B cell (primary cell): ENCODE measurements at regions of chr12 and their contacts with region 1.

Region 1: DNA sequence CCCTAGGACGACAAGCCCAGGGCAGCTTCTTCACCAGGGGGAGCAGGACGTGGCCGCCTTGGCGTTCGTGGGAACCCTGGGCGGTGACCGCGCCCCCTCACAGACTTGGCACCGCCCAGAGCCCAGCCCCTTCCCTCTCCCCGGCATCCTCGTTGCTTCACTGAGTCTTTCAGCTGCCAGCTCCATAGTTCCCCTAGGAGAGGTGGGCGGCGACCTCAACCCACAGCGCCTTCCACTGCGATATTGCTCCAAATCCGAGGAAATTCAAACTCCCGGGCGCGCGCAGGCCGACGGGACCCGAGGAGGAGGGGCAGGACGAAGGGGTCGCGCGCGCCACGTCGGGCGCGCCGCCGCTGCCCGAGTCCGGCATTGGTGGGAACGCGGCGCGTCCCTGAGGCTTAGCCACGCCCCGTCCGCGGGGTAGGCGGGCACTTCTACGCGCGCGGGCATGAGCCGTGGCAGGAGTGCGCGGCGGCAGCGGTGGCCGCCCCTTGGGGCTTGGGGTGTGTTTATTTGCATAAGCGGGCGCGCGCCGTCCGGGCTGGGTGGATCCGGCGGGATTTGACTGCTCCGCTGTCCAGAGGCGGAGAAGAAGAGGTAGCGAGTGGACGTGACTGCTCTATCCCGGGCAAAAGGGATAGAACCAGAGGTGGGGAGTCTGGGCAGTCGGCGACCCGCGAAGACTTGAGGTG is at the starts of genes APAF1 and IKBIP:
- DNase-seq: peak; percentile 98
- ATAC-seq: peak; percentile 88
- H3K4me3 ChIP-seq: peak within 1 kb of the TSS; percentile 84 to 99 (median 92)
- H3K4me3 Mint-ChIP-seq: peak within 1 kb of the TSS; percentile 96
- H3K27ac ChIP-seq: peak within 1 kb of the TSS; percentile 77 to 84
- H3K27ac Mint-ChIP-seq: peak within 1 kb of the TSS; percentile 98
- H3K4me1 ChIP-seq: peaks cover 13 to 14% of the 10 kb centered on the region in 2 donors
- H3K4me1 Mint-ChIP-seq: peaks cover 23% of the 10 kb centered on the region
- H3K27me3 ChIP-seq: no peaks in the 10 kb centered on the region
- H3K27me3 Mint-ChIP-seq: no peaks in the 10 kb centered on the region
- CTCF ChIP-seq: peak; percentile 1
- total RNA-seq, gene APAF1: 36.9 and 37.8 TPM in 2 replicates
- total RNA-seq, gene IKBIP: 12.0 TPM in 2 replicates

Region 2: GRCh38 chr12:96906849-96907670 is 1737.8 kb before region 1 on chr12 and contains the start of gene NEDD1:
- CTCF ChIA-PET with region 1: no interaction called
- POLR2A ChIA-PET with region 1: no interaction called
- intact Hi-C with region 1: loop called (anchors 2 kb)
- DNase-seq: peak; percentile 89
- ATAC-seq: peak; percentile 85
- H3K4me3 ChIP-seq: peak within 1 kb of the TSS; percentile 82 to 98 (median 94)
- H3K4me3 Mint-ChIP-seq: peak within 1 kb of the TSS; percentile 97
- H3K27ac ChIP-seq: peak within 1 kb of the TSS; percentile 91 to 96
- H3K27ac Mint-ChIP-seq: peak within 1 kb of the TSS; percentile 97
- H3K4me1 ChIP-seq: peaks cover 17 to 21% of the 10 kb centered on the region in 2 donors
- H3K4me1 Mint-ChIP-seq: peaks cover 42% of the 10 kb centered on the region
- H3K27me3 ChIP-seq: no peaks in the 10 kb centered on the region
- H3K27me3 Mint-ChIP-seq: no peaks in the 10 kb centered on the region
- CTCF ChIP-seq: no peak
- total RNA-seq, gene NEDD1: 16.8 and 20.3 TPM in 2 replicates

Region 3: DNA sequence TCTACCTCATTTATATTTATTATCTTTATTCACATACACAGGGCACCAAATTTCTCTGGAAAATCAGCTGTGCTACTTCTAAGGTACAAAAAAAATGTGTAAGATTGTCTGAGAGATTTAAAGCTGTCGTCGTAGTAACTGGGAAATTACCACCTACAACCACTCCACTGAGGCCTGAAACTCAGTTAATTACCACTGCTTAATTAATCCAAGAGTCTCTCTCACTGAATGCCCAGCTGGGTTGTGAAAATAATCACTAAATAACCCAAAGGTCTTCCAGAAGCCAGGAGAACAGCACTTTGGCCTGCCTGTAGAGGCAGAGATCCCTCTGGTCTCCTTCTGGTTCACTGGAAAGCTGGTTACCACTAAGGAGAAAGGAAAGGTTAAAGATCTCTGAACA is 336.7 kb before region 1 on chr12:
- CTCF ChIA-PET with region 1: no interaction called
- POLR2A ChIA-PET with region 1: no interaction called
- intact Hi-C with region 1: no loop called
- DNase-seq: no peak
- ATAC-seq: no peak
- H3K4me3 ChIP-seq: no peak overlapping the region
- H3K4me3 Mint-ChIP-seq: no peak overlapping the region
- H3K27ac ChIP-seq: no peak overlapping the region
- H3K27ac Mint-ChIP-seq: no peak overlapping the region
- H3K4me1 ChIP-seq: no peaks in the 10 kb centered on the region
- H3K4me1 Mint-ChIP-seq: no peaks in the 10 kb centered on the region
- H3K27me3 ChIP-seq: peaks cover 0 to 4% (median 1%) of the 10 kb centered on the region in 4 experiments
- H3K27me3 Mint-ChIP-seq: peaks cover 15% of the 10 kb centered on the region
- CTCF ChIP-seq: no peak

Region 4: DNA sequence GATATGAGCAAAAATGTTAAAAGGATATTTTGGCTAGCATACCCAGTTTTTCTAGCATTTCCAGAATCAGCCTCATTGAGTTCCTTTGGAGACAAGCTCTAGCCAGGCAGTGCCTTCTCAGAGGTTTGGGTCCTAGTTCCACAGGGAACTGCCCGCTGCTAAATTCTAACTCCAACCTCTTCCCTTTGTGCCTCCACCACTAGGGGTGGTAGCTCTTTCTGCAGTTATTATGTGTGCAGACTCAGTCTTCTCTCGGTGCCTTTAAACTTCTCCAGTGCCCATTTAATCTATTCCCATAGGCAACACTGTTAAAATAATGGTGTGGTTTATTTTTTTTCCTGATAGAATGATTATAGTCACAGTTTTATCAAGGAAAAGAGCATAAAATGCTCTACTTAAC is 72.8 kb before region 1 on chr12:
- CTCF ChIA-PET with region 1: interaction called, 127 read pairs
- POLR2A ChIA-PET with region 1: interaction called, 3 read pairs
- intact Hi-C with region 1: loop called (anchors 2 kb)
- DNase-seq: no peak
- ATAC-seq: no peak
- H3K4me3 ChIP-seq: no peak overlapping the region
- H3K4me3 Mint-ChIP-seq: no peak overlapping the region
- H3K27ac ChIP-seq: no peak overlapping the region
- H3K27ac Mint-ChIP-seq: no peak overlapping the region
- H3K4me1 ChIP-seq: no peaks in the 10 kb centered on the region
- H3K4me1 Mint-ChIP-seq: no peaks in the 10 kb centered on the region
- H3K27me3 ChIP-seq: no peaks in the 10 kb centered on the region
- H3K27me3 Mint-ChIP-seq: peaks cover 3% of the 10 kb centered on the region
- CTCF ChIP-seq: peak; percentile 12

Region 5: GRCh38 chr12:98612696-98613334 is 32.0 kb before region 1 on chr12:
- CTCF ChIA-PET with region 1: interaction called, 11 read pairs
- POLR2A ChIA-PET with region 1: interaction called, 3 read pairs
- intact Hi-C with region 1: loop called (anchors 1 kb)
- DNase-seq: peak; percentile 86
- ATAC-seq: peak; percentile 93
- H3K4me3 ChIP-seq: peak overlapping the region in 1 of 5 experiments; percentile 15
- H3K4me3 Mint-ChIP-seq: peak overlapping the region; percentile 62
- H3K27ac ChIP-seq: peak overlapping the region; percentile 63 to 67
- H3K27ac Mint-ChIP-seq: peak overlapping the region; percentile 95
- H3K4me1 ChIP-seq: peaks cover 14 to 16% of the 10 kb centered on the region in 2 donors
- H3K4me1 Mint-ChIP-seq: peaks cover 24% of the 10 kb centered on the region
- H3K27me3 ChIP-seq: no peaks in the 10 kb centered on the region
- H3K27me3 Mint-ChIP-seq: no peaks in the 10 kb centered on the region
- CTCF ChIP-seq: no peak

Region 6: GRCh38 chr12:100142851-100143559 is 1498.1 kb after region 1 on chr12 and contains the start of gene BLTP3B:
- CTCF ChIA-PET with region 1: no interaction called
- POLR2A ChIA-PET with region 1: no interaction called
- intact Hi-C with region 1: loop called (anchors 2 kb)
- DNase-seq: peak; percentile 91
- ATAC-seq: peak; percentile 95
- H3K4me3 ChIP-seq: peak within 1 kb of the TSS; percentile 67 to 97 (median 93)
- H3K4me3 Mint-ChIP-seq: peak within 1 kb of the TSS; percentile 99
- H3K27ac ChIP-seq: peak within 1 kb of the TSS; percentile 92 to 95
- H3K27ac Mint-ChIP-seq: peak within 1 kb of the TSS; percentile 98
- H3K4me1 ChIP-seq: peaks cover 27 to 30% of the 10 kb centered on the region in 2 donors
- H3K4me1 Mint-ChIP-seq: peaks cover 41% of the 10 kb centered on the region
- H3K27me3 ChIP-seq: no peaks in the 10 kb centered on the region
- H3K27me3 Mint-ChIP-seq: no peaks in the 10 kb centered on the region
- CTCF ChIP-seq: no peak
- total RNA-seq, gene BLTP3B: 27.4 and 30.2 TPM in 2 replicates